Breast epithelium (tissue), 4 donors: ENCODE measurements at regions of chr9 and their contacts with region 1.

Region 1: DNA sequence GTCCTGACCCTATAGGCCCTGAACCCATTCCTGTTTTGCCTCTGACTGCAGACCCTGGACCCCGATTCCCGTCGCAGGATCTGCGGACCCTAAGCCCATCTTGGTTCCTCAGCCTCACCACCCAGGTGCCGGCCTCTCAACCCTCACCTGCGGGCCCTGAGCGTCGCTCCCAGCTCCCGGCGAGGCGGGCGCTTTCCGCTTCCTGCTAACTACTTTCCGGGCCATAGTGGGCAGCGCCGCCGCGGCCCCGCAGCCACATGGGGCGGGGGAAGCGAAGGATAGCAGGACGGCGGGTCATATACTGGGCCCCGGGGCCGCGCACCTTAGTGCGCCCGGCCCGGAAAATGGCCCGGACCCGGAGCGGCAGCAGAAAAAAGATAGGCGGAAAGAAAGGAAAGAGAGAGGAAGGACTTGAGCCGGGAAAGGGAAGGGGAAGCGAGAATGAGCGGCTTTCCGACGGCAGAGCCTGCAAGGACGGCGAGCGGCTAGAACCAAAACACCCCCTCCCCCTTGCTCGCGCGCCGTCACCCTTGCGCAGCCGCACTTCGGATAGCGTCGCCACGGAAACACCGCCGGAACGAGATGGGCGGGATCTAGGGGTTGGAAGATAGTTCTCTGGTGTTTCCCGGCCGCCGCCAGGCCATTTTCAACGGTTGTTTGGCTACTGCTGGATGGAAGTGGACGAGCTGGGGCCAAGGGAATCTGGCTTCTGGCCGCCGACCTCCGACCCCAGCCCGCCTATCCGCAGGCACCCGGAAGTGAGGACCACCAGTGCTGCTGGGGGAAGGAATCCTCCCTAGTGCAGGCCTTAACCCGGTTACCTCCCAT is at the start of gene DCAF12:
- DNase-seq: peak; percentile 81 to 91
- H3K4me3 ChIP-seq: peak within 1 kb of the TSS; percentile 70 to 89 (median 83)
- H3K27ac ChIP-seq: peak within 1 kb of the TSS; percentile 88 to 96
- H3K4me1 ChIP-seq: peaks cover 0 to 9% of the 10 kb centered on the region in 2 donors
- H3K27me3 ChIP-seq: no peaks in the 10 kb centered on the region
- CTCF ChIP-seq: no peak
- POLR2A ChIP-seq: peak; percentile 68
- total RNA-seq, gene DCAF12: 25.6 to 36.7 (median 29.6) TPM

Region 2: GRCh38 chr9:34178520-34179212 is 52.2 kb after region 1 on chr9 and contains the start of gene UBAP1:
- intact Hi-C with region 1: loop called (anchors 10 kb)
- DNase-seq: peak; percentile 97 to 98
- H3K4me3 ChIP-seq: peak within 1 kb of the TSS; percentile 67 to 91 (median 86)
- H3K27ac ChIP-seq: peak within 1 kb of the TSS; percentile 99
- H3K4me1 ChIP-seq: no peaks in the 10 kb centered on the region
- H3K27me3 ChIP-seq: no peaks in the 10 kb centered on the region
- CTCF ChIP-seq: peak in 2 of 3 donors; percentile 15 to 31
- POLR2A ChIP-seq: peak; percentile 95
- total RNA-seq, gene UBAP1: 49.5 to 56.5 (median 51.4) TPM

Region 3: DNA sequence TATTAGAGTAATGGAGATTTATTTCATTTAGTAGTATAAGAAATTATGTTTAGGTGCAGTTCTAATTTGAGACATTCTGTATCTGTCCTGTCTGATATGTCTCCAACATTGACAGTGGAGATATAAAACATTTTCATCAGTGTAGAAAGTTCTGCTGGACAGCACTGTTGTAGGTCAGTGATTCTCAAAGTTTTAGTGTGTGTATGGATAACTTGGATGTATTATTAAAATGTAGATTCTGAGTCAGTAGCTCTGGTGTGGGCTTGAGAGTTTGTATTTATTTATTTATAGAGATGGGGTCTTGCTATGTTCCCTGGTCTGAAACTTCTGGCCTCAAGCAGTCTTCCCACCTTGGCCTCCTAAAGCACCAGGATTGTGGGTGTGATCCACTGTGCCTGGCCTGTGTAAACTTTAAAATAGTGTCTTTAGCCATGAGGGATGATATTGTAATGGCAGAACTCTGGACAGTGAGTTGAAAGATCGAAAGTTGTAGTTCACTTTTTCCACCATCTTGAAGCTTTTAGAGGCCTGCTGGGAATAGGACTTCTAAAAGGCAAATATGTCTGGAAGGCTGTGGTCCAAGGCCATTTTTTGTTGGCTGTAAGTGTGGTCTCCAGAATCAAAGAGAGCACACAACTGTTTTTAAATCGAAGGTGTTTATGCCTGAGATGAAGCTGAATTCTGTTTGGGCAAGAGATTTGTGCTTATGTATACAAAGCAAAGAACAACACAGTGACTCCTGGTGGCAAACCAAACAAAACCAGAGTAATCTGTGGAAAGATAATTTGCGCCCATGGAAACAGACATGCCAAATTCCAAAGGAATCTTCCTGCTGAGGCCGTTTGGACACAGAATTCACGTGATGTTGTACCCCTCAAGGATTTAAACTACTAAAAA is 64.8 kb after region 1 on chr9:
- intact Hi-C with region 1: no loop called
- DNase-seq: no peak
- H3K4me3 ChIP-seq: no peak overlapping the region
- H3K27ac ChIP-seq: peak overlapping the region in 1 of 2 donors; percentile 0
- H3K4me1 ChIP-seq: peaks cover 0 to 12% of the 10 kb centered on the region in 2 donors
- H3K27me3 ChIP-seq: no peaks in the 10 kb centered on the region
- CTCF ChIP-seq: peak in 1 of 3 donors; percentile 30
- POLR2A ChIP-seq: no peak

Region 4: GRCh38 chr9:34252670-34253459 is 126.4 kb after region 1 on chr9:
- intact Hi-C with region 1: loop called (anchors 10 kb)
- DNase-seq: peak; percentile 57 to 63
- H3K4me3 ChIP-seq: no peak overlapping the region
- H3K27ac ChIP-seq: peak overlapping the region; percentile 80 to 90
- H3K4me1 ChIP-seq: peaks cover 14 to 17% of the 10 kb centered on the region in 2 donors
- H3K27me3 ChIP-seq: no peaks in the 10 kb centered on the region
- CTCF ChIP-seq: peak in 2 of 3 donors; percentile 84 to 90
- POLR2A ChIP-seq: no peak

Region 5: GRCh38 chr9:35910613-35911359 is 1784.4 kb after region 1 on chr9:
- intact Hi-C with region 1: loop called (anchors 5 kb)
- DNase-seq: no peak
- H3K4me3 ChIP-seq: peak overlapping the region; percentile 6 to 54 (median 17)
- H3K27ac ChIP-seq: peak overlapping the region; percentile 95 to 100
- H3K4me1 ChIP-seq: peaks cover 34 to 52% of the 10 kb centered on the region in 2 donors
- H3K27me3 ChIP-seq: no peaks in the 10 kb centered on the region
- CTCF ChIP-seq: peak in 2 of 3 donors; percentile 36 to 60
- POLR2A ChIP-seq: no peak